Activated CD4-positive, alpha-beta T cell treated with anti-CD3 and anti-CD28 coated beads, Interleukin-2, amount 10 ng/mL, durations not matched to agents 24 days and 14 days (primary cell): ENCODE measurements at regions of chr6 and their contacts with region 1.

Region 1: DNA sequence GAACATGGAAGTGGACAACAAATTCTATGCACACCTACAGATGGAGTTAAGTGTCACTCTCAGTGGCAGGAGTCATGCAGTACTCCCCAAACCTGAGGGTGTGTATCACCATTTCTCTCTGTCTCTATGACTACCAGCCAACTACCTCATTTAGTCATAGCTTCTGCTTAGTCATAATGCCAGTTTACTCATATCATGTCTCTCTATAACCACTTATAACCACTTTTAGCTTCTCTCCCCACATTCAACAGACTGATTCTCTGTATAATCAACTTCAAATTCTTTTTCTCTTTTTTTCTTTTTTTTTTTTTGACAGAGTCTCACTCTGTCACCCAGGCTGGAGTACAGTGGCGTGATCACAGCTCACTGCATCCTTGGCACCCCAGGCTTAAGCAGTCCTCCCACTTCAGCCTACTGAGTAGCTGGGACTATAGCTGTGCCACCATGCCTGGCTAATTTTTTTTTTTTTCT is 13.8 kb upstream of the GTF3C6 start:
- DNase-seq: peak; percentile 80
- H3K4me3 Mint-ChIP-seq: peak overlapping the region; percentile 32
- H3K27ac Mint-ChIP-seq: peak overlapping the region; percentile 86
- H3K4me1 Mint-ChIP-seq: peaks cover 7% of the 10 kb centered on the region
- H3K27me3 Mint-ChIP-seq: no peaks in the 10 kb centered on the region

Region 2: GRCh38 chr6:110873981-110874879 is 70.5 kb before region 1 on chr6 and contains the start of gene AMD1:
- intact Hi-C with region 1: loop called (anchors 1 kb)
- DNase-seq: peak; percentile 98
- H3K4me3 Mint-ChIP-seq: peak within 1 kb of the TSS; percentile 98
- H3K27ac Mint-ChIP-seq: peak within 1 kb of the TSS; percentile 99
- H3K4me1 Mint-ChIP-seq: peaks cover 27% of the 10 kb centered on the region
- H3K27me3 Mint-ChIP-seq: no peaks in the 10 kb centered on the region
- total RNA-seq, gene AMD1: 108 and 113 TPM in 2 replicates

Region 3: GRCh38 chr6:110958329-110959192 is 13.8 kb after region 1 on chr6 and contains the start of gene GTF3C6:
- intact Hi-C with region 1: loop called (anchors 1 kb)
- DNase-seq: peak; percentile 98
- H3K4me3 Mint-ChIP-seq: peak within 1 kb of the TSS; percentile 93
- H3K27ac Mint-ChIP-seq: peak within 1 kb of the TSS; percentile 97
- H3K4me1 Mint-ChIP-seq: peaks cover 12% of the 10 kb centered on the region
- H3K27me3 Mint-ChIP-seq: no peaks in the 10 kb centered on the region
- total RNA-seq, gene GTF3C6: 145 and 146 TPM in 2 replicates